ENCODE measurements at regions of chr1 and their contacts with region 1.

Region 1: DNA sequence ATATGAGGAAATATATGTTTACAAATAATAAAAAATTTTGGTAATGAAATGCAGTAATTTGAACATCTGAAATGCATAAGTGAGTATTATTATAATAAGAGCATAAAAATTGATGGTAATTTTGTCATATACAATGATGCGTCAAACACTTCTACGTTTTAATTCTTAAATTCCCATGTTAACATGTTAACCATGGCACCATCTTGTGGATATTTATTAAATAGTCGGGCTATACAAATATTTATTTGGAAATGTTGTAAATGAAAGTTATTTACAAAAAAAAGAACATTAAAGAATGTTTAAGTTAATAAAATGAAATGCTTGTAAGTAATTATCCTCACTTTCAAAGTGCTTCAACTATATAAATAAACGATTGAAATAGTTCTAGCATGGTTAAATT is 57.2 kb upstream of the C1orf185 start:
- DNase-seq: peak in 1 of 5 donors; percentile 2
- H3K4me3 ChIP-seq: no peak overlapping the region
- H3K27ac ChIP-seq: no peak overlapping the region
- H3K4me1 ChIP-seq: no peaks in the 10 kb centered on the region
- H3K27me3 ChIP-seq: no peaks in the 10 kb centered on the region
- CTCF ChIP-seq: peak; percentile 22

Region 2: GRCh38 chr1:50774759-50775351 is 270.0 kb before region 1 on chr1:
- intact Hi-C with region 1: loop called (anchors 10 kb)
- DNase-seq: peak in 2 of 5 donors; percentile 67 to 81
- H3K4me3 ChIP-seq: no peak overlapping the region
- H3K27ac ChIP-seq: no peak overlapping the region
- H3K4me1 ChIP-seq: no peaks in the 10 kb centered on the region
- H3K27me3 ChIP-seq: no peaks in the 10 kb centered on the region
- CTCF ChIP-seq: peak; percentile 55

Measured in kidney (tissue), 22 donors.